K562 (cell line): ENCODE measurements at regions of chrX and their contacts with region 1.

Region 1: DNA sequence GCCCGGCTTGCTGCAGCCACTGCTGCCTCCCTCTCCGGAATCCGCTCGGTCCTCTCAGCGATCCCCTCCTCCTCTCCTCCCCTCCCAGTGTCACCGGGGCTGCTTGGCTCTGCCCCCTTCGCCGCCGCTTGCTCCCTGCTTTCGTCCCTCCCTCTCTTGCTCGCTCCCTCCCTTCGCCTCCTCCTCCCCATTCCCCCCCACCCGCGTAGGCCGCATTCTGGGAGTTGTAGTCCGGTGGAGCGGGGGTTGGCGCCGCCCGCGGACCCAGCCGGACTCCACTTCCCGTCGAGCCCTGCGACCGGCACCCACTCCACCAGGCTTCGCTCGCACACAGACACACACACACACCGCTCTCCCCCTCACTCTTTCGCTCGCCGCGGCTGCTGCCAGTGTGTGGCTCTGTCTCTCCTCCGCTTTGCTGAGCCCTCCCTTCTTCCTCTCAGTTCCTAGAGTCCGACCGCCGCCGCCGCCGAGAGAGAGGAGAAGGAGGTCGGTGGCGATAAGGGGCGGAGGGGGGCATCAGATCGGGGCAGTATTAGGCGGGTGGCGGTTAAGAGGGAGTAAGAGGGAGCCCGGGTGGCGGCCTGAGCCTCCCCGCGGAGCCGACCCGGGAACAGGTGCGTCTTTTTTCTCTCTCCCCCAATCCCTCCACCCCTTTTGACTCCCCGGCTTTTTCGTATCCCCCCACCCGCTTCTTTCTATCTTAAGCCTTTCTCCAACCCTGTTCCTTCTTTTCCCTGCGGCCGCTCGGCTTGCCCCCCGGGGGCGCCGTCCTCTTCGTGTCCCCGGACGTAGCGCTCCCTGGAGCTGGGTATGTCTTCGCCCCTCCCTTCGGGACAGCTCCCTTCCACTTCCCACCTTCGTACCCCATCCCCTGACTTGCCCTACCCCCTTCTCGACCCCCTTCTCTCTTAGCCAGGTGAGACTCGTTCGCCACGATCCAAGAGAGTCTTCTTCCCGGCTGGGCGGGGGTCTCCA is at the start of gene BCORL1:
- DNase-seq: peak; percentile 87 to 96 (median 92)
- ATAC-seq: peak; percentile 94
- H3K4me3 ChIP-seq: no peak within 1 kb of the TSS
- H3K27ac ChIP-seq: peak within 1 kb of the TSS; percentile 61
- H3K4me1 ChIP-seq: peaks cover 10 to 29% of the 10 kb centered on the region in 2 experiments; a peak in 4 of 5 replicates
- H3K27me3 ChIP-seq: no peaks in the 10 kb centered on the region
- CTCF ChIP-seq: peak; percentile 23 to 26 (median 25); a peak in 2 of 6 replicates
- EP300 ChIP-seq: peak; percentile 31; the same call in 1 of the 2 replicates
- POLR2A ChIP-seq: peak; percentile 95
- RAD21 ChIP-seq: no peak
- polyA plus RNA-seq, gene BCORL1: 0.48 to 0.55 TPM

Region 2: DNA sequence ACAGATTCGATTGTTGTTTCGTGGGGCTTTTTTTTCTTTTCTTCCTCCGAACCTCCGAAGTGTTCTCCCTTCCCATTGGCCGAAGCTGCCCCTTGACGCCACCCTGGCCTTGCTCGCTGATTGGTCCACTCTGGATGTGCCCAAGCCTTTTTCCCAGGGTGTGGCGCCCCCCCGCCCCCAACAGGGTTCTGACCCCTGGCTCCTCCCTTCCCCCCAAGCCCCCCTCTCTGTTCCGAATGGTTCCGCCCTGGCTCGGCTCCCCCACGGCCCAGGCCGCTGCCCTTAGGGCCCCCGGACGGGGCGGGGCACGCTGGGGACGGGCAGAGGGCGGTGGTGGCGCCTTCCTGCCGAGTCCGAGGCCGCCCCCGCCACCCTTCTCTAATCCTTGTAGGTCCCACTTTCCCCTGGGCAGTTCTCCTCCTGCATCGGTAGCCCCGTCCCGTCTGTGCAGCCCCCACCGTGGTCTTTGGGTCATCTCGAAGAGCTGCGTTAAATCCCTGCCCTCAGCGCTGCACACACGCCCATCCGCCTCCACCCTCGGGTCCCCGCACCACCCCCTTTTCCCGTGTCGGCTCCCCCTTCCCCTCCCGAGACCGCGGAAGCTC is 51.0 kb before region 1 on chrX:
- CTCF ChIA-PET with region 1: no interaction called
- POLR2A ChIA-PET with region 1: no interaction called
- in situ Hi-C with region 1: no loop called
- intact Hi-C with region 1: loop called (anchors 2 kb)
- DNase-seq: peak; percentile 90 to 94 (median 92)
- ATAC-seq: peak; percentile 90
- H3K4me3 ChIP-seq: peak overlapping the region; percentile 65
- H3K27ac ChIP-seq: peak overlapping the region; percentile 82
- H3K4me1 ChIP-seq: peaks cover 4 to 19% of the 10 kb centered on the region in 2 experiments; a peak in 3 of 5 replicates
- H3K27me3 ChIP-seq: no peaks in the 10 kb centered on the region
- CTCF ChIP-seq: no peak
- EP300 ChIP-seq: no peak
- POLR2A ChIP-seq: peak; percentile 67
- RAD21 ChIP-seq: no peak

Region 3: GRCh38 chrX:130144509-130144908 is 161.9 kb after region 1 on chrX:
- CTCF ChIA-PET with region 1: no interaction called
- POLR2A ChIA-PET with region 1: no interaction called
- in situ Hi-C with region 1: no loop called
- intact Hi-C with region 1: no loop called
- DNase-seq: no peak
- ATAC-seq: peak; percentile 66; the same call in 2 of the 3 replicates
- H3K4me3 ChIP-seq: no peak overlapping the region
- H3K27ac ChIP-seq: no peak overlapping the region
- H3K4me1 ChIP-seq: peaks cover 0 to 7% of the 10 kb centered on the region in 2 experiments; a peak in 3 of 5 replicates
- H3K27me3 ChIP-seq: no peaks in the 10 kb centered on the region
- CTCF ChIP-seq: peak in 2 of 3 experiments; percentile 10 to 40; a peak in 2 of 6 replicates
- EP300 ChIP-seq: no peak
- POLR2A ChIP-seq: no peak
- RAD21 ChIP-seq: peak in 1 of 2 experiments; percentile 52; a peak in 3 of 4 replicates

Region 4: DNA sequence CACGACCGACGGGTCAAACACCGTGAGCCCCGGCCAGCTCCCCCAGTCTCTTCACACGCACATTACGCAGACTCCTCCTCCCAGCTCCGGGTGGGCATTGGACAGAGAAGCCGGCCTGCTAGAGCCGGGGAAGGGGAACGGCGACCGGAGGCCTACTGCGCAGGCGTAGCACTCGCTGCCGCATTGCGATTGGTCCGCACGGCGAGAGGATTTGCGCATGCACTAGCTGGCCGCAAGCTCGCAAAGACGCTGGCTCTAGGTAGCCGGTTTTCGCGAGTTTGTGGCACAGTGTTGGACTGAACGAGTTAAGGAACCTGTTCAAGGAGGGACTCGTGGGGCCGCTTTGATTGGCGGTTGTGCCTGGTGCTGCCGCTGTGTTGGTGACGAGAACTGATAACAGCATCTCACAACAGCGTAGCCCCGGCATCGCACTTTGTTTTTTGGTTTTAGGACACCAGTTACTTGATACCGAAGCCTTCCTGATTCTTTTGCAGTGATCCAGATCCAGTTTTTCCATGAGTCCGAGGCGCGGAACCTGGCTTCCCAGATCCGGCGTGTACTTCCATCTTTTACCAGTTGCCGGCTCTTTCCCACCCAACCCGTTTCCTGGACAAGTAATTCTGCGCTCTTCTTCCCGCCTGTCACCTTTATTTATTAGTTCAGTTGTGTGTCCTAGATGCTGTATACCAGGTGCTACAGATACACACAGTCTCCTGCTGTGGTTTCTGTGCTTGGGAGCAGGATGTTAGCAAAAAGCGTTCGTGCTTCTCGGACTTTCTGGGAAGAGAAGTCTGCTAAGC is 183.3 kb after region 1 on chrX and contains the start of gene AIFM1:
- CTCF ChIA-PET with region 1: no interaction called
- POLR2A ChIA-PET with region 1: no interaction called
- in situ Hi-C with region 1: no loop called
- intact Hi-C with region 1: no loop called
- DNase-seq: peak; percentile 91 to 96 (median 93)
- ATAC-seq: peak; percentile 92
- H3K4me3 ChIP-seq: peak within 1 kb of the TSS; percentile 68
- H3K27ac ChIP-seq: peak within 1 kb of the TSS; percentile 98
- H3K4me1 ChIP-seq: peaks cover 8 to 23% of the 10 kb centered on the region in 2 experiments; a peak in 3 of 5 replicates
- H3K27me3 ChIP-seq: no peaks in the 10 kb centered on the region
- CTCF ChIP-seq: no peak
- EP300 ChIP-seq: 0 out of 2 replicates have a peak, but pooled peaks have one; percentile 39
- POLR2A ChIP-seq: peak; percentile 93
- RAD21 ChIP-seq: peak; percentile 13 to 16; a peak in 1 of 4 replicates
- polyA plus RNA-seq, gene AIFM1: 51.0 to 62.0 TPM